ENCODE measurements at regions of chr5 and their contacts with region 1.

Region 1: DNA sequence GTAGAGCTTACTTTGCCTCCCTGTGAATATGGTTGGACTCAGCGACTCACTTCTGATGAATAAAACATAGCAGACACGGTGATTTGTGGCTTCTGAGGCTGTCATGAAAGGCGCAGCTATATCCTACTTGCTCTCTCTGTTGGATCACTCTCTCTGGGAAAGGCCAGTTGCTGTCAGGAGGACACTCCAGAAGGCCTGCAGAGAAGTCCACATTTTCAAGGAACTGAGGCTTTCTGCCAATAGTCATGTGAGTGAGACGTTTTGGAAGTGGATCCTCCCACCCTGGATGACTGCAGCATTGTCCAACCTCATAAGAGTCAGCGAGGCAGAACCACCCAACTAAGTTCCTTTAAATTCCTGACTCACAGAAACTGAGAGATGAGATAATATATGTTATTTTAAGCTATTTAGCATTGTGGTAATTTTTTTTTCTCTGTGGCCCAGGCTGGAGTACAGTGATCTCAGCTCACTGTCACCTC is 156.0 kb upstream of the MAST4 start:
- DNase-seq: peak; percentile 50
- ATAC-seq: peak; percentile 93

Region 2: GRCh38 chr5:66324357-66324756 is 115.9 kb before region 1 on chr5:
- intact Hi-C with region 1: loop called (anchors 2 kb)
- DNase-seq: peak; percentile 64
- ATAC-seq: peak; percentile 83

Region 3: GRCh38 chr5:66367814-66368541 is 72.3 kb before region 1 on chr5:
- intact Hi-C with region 1: loop called (anchors 5 kb)
- DNase-seq: no peak
- ATAC-seq: peak; percentile 91

Region 4: GRCh38 chr5:66477596-66477995 is 37.4 kb after region 1 on chr5:
- intact Hi-C with region 1: loop called (anchors 5 kb)
- DNase-seq: peak; percentile 61
- ATAC-seq: peak; percentile 88

Region 5: DNA sequence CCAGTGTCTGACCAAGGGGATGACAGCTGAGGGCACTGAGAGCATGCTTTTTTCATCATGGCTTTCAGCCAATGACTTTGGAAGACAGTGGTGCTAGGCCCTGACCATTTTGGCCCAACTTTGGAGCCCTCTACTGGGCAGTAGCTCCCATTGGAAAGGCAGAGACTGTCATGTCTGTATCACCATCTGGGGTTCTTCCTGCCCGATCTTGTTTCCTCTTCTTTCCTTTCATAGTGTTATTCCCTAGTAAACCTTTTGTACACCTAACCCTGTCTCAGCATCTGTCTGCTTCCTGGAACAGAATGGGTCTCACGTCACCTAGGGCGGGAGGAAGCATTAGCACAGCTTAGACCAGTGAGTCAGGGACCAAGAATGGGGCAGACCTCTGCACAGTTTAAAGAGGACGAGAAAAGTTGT is 58.6 kb after region 1 on chr5:
- intact Hi-C with region 1: loop called (anchors 5 kb)
- DNase-seq: no peak
- ATAC-seq: peak; percentile 88

Region 6: GRCh38 chr5:66595756-66596635 is 155.8 kb after region 1 on chr5 and contains the start of gene MAST4:
- intact Hi-C with region 1: loop called (anchors 5 kb)
- DNase-seq: peak; percentile 92
- ATAC-seq: peak; percentile 96
- total RNA-seq, gene MAST4: 39.6 TPM

Region 7: GRCh38 chr5:66769839-66770617 is 329.8 kb after region 1 on chr5:
- intact Hi-C with region 1: loop called (anchors 10 kb)
- DNase-seq: no peak
- ATAC-seq: peak; percentile 63